A549 (cell line): ENCODE measurements at regions of chr19 and their contacts with region 1.

Region 1: GRCh38 chr19:50537762-50538230 is 24.1 kb upstream of the ASPDH start:
- DNase-seq: peak; percentile 95 to 98
- ATAC-seq: peak; percentile 90 to 98
- H3K4me3 ChIP-seq: no peak overlapping the region
- H3K27ac ChIP-seq: no peak overlapping the region
- H3K4me1 ChIP-seq: no peaks in the 10 kb centered on the region
- CTCF ChIP-seq: peak; percentile 98
- EP300 ChIP-seq: no peak
- POLR2A ChIP-seq: no peak
- RAD21 ChIP-seq: peak; percentile 87

Region 2: GRCh38 chr19:50476224-50476942 is 61.4 kb before region 1 on chr19 and contains the starts of genes EMC10 and GARIN5A:
- CTCF ChIA-PET with region 1: interaction called, 14 read pairs
- POLR2A ChIA-PET with region 1: no interaction called
- DNase-seq: peak; percentile 99
- ATAC-seq: peak; percentile 73 to 91
- H3K4me3 ChIP-seq: peak within 1 kb of the TSS; percentile 86
- H3K27ac ChIP-seq: peak within 1 kb of the TSS; percentile 87 to 93
- H3K4me1 ChIP-seq: peaks cover 12% of the 10 kb centered on the region
- CTCF ChIP-seq: no peak
- EP300 ChIP-seq: no peak
- POLR2A ChIP-seq: peak; percentile 96
- RAD21 ChIP-seq: no peak
- polyA plus RNA-seq, gene EMC10: 52.8 and 54.0 TPM in 2 replicates
- polyA plus RNA-seq, gene GARIN5A: 0.57 and 1.1 TPM in 2 replicates

Region 3: GRCh38 chr19:50516964-50517703 is 20.7 kb before region 1 on chr19:
- CTCF ChIA-PET with region 1: interaction called, 91 read pairs
- POLR2A ChIA-PET with region 1: no interaction called
- DNase-seq: peak in 1 of 2 experiments; percentile 47
- ATAC-seq: peak in 1 of 2 experiments; percentile 7; a peak in 3 of 6 replicates
- H3K4me3 ChIP-seq: peak overlapping the region; percentile 13; the same call in 1 of the 3 replicates
- H3K27ac ChIP-seq: peak overlapping the region; percentile 5 to 59; a peak in 3 of 6 replicates
- H3K4me1 ChIP-seq: peaks cover 10% of the 10 kb centered on the region; the same call in 1 of the 3 replicates
- CTCF ChIP-seq: no peak
- EP300 ChIP-seq: no peak
- POLR2A ChIP-seq: no peak
- RAD21 ChIP-seq: no peak

Region 4: DNA sequence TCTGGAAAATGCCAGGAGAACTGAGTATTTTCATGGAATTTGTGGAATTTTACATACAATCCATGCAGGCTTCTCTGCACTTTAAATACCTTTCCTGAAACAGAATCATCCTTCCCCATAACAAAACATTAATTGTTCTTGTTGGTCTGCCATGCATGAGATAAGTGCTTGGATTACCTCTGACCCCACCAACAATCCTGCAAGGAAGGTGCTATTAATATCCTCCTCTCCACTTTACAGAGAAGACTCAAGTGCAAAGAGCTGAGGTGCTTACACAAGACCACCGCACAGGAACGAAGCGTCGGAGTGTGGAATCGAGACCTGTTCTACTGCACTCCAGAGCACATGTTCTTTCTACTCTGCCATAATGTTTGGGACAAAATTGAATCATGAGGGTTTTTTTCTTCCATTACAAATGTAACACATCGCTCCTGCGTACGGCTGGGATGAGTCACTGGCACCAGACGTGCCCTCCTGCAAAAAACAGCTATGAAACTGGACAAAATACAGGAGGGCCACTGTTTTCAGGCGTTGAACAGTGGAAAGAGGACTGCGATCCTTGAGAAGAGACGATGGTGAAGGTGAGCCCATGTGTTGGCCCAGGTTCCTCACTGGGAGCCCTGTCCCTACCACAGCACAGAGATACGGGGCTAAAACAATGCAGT is 43.3 kb after region 1 on chr19:
- CTCF ChIA-PET with region 1: interaction called, 28 read pairs
- POLR2A ChIA-PET with region 1: no interaction called
- DNase-seq: no peak
- ATAC-seq: no peak
- H3K4me3 ChIP-seq: no peak overlapping the region
- H3K27ac ChIP-seq: no peak overlapping the region
- H3K4me1 ChIP-seq: no peaks in the 10 kb centered on the region
- CTCF ChIP-seq: no peak
- EP300 ChIP-seq: no peak
- POLR2A ChIP-seq: no peak
- RAD21 ChIP-seq: no peak

Region 5: GRCh38 chr19:50601407-50602088 is 63.8 kb after region 1 on chr19:
- CTCF ChIA-PET with region 1: interaction called, 20 read pairs
- POLR2A ChIA-PET with region 1: no interaction called
- DNase-seq: no peak
- ATAC-seq: no peak
- H3K4me3 ChIP-seq: no peak overlapping the region
- H3K27ac ChIP-seq: no peak overlapping the region
- H3K4me1 ChIP-seq: no peaks in the 10 kb centered on the region
- CTCF ChIP-seq: no peak
- EP300 ChIP-seq: no peak
- POLR2A ChIP-seq: no peak
- RAD21 ChIP-seq: no peak

Region 6: DNA sequence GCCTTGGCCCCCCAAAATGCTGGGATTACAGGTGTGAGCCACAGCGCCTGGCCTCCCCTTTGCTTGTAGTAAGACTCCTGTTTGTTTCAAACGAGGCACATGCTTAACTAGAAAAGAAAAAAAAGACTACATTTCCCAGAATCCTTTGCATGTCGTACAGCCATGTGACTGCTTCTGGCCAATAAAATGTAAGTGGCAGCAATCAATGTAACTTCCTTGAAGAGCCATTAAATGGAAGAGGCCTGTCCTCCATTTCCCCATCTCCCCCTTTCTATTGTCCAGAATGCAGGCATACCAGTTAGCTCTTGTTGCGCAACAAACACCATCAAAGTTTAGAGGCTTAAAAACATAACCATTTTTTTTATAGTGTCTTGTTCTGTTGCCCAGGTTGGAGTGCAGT is 222.1 kb after region 1 on chr19:
- CTCF ChIA-PET with region 1: interaction called, 11 read pairs
- POLR2A ChIA-PET with region 1: no interaction called
- DNase-seq: peak; percentile 55 to 72
- ATAC-seq: peak in 1 of 2 experiments; percentile 59; a peak in 3 of 6 replicates
- H3K4me3 ChIP-seq: no peak overlapping the region
- H3K27ac ChIP-seq: no peak overlapping the region
- H3K4me1 ChIP-seq: no peaks in the 10 kb centered on the region
- CTCF ChIP-seq: no peak
- EP300 ChIP-seq: no peak
- POLR2A ChIP-seq: no peak
- RAD21 ChIP-seq: no peak

Region 7: DNA sequence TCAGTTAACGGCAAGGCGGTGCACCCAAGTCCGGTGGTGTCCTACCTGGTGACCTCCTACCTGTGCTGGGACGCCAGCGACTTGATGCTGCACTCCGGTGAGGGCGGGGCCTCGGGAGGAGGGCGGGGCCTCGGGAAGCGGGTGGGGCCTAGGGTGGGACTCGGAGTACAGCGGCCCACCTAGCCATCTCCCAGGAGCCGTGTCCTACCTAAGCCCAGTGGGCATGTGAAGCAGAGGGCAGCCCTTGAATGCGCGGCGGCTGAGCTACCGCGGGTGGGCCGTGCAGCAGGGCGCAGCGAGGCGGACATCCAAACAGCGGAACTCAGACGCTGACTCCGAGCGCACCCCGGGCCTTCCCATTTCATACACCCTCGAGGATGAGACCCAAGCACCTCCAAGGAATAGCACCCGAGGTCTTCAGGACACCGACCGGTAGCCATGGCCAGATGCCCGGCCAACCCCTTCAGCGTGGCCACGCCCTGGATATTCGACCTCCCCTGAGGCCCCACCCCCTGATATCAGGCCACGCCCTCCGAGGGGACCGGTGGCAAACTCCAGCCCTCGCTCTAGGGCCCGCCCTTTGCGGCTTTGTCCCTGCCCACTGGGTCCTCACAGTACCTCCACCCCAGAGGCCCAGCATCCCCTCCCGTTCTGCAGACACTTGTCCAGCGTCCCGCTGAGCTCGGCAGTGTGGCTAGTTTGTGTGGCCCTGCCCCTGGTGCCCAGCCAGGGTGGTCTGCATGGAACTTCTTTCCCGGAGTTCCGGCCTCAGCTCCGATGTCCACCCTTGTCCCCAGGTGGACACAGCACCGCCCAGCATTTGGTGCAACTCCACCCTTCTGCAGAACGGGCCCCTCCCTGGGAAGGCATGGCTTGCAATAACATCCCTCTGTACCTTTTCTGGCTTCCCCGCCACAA is 280.4 kb after region 1 on chr19:
- CTCF ChIA-PET with region 1: no interaction called
- POLR2A ChIA-PET with region 1: no interaction called
- DNase-seq: peak; percentile 67 to 95
- ATAC-seq: peak; percentile 76 to 93
- H3K4me3 ChIP-seq: peak overlapping the region; percentile 68
- H3K27ac ChIP-seq: peak overlapping the region; percentile 48 to 79; a peak in 5 of 6 replicates
- H3K4me1 ChIP-seq: peaks cover 9% of the 10 kb centered on the region; the same call in 1 of the 3 replicates
- CTCF ChIP-seq: no peak
- EP300 ChIP-seq: no peak
- POLR2A ChIP-seq: no peak
- RAD21 ChIP-seq: no peak